AG04450 (cell line): ENCODE measurements at regions of chr16 and their contacts with region 1.

Region 1: DNA sequence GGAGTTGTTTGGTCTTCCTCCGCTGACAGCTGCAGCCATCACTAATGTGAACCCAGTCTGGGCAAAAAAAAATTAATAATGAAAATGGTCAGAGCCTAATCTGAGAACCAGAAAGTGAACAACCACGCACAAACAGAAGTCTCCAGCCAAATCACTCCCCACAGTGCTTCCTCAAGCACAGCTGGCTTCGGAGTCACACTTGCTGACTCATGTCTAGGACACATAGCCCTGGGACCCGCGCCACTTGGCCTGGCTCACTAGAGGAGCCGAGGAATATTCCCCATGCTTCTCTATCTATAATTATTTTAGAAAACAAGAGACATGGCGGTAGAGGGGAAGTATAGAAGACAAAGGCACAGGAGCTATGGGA is 109.1 kb downstream of the ZFHX3 start:
- DNase-seq: peak; percentile 23
- H3K4me3 ChIP-seq: 0 out of 2 replicates have a peak overlapping the region, but pooled peaks have one; percentile 20
- H3K27ac ChIP-seq: peak overlapping the region; percentile 80
- H3K27me3 ChIP-seq: no peaks in the 10 kb centered on the region
- CTCF ChIP-seq: no peak

Region 2: GRCh38 chr16:72952811-72953595 is 14.2 kb after region 1 on chr16:
- CTCF ChIA-PET with region 1: interaction called, 13 read pairs
- POLR2A ChIA-PET with region 1: interaction called, 4 read pairs
- DNase-seq: peak; percentile 67
- H3K4me3 ChIP-seq: no peak overlapping the region
- H3K27ac ChIP-seq: peak overlapping the region; percentile 61
- H3K27me3 ChIP-seq: no peaks in the 10 kb centered on the region
- CTCF ChIP-seq: no peak

Region 3: DNA sequence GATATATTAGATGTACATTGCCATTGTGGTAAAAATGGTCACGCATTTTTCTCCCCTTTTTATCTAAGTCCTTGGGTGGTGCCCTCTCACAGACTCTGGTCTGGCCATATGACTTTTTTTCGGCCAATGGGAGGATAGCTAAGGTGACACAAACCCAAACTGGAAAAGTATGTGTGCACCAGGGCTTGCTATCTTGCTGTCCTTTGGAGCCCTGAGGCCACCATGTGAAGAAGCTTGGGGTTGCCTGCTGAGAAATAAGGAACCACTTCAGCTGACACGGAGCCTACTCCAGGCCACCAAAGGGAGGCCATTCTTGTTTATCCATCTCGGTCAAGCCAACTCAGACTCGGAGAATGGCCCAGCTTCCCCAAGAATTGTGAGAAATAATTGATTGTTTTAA is 220.5 kb after region 1 on chr16:
- CTCF ChIA-PET with region 1: no interaction called
- POLR2A ChIA-PET with region 1: no interaction called
- DNase-seq: no peak
- H3K4me3 ChIP-seq: no peak overlapping the region
- H3K27ac ChIP-seq: no peak overlapping the region
- H3K27me3 ChIP-seq: no peaks in the 10 kb centered on the region
- CTCF ChIP-seq: no peak